ENCODE measurements at regions of chr14 and their contacts with region 1.

Region 1: DNA sequence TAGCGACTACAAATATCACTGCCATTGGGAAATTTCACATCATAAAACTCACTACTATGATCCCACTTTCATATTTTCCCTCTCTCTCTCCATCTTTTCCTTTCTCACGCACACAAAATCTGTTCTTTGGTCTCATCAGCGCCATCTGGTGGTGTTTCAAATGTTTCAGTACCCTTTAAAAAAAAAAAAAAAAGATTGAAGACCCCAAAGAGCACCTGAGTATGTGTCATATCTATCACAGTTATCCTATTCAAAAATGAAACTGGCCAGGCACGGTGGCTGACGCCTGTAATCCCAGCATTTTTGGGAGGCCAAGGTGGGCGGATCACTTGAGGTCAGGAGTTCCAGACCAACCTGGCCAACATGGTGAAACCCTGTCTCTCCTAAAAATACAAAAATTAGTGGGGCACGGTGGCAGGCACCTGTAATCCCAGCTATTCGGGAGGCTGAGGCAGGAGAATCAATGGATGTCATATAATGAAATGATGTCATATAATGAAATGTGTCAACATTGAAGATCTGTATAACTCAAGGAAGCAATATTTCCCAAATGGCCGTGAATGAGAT is 72.4 kb downstream of the TTC9 start:
- H3K4me3 ChIP-seq: no peak overlapping the region
- H3K27ac ChIP-seq: no peak overlapping the region
- H3K4me1 ChIP-seq: 0 out of 2 replicates have a peak, but pooled peaks cover 2% of the 10 kb centered on the region
- CTCF ChIP-seq: no peak

Region 2: DNA sequence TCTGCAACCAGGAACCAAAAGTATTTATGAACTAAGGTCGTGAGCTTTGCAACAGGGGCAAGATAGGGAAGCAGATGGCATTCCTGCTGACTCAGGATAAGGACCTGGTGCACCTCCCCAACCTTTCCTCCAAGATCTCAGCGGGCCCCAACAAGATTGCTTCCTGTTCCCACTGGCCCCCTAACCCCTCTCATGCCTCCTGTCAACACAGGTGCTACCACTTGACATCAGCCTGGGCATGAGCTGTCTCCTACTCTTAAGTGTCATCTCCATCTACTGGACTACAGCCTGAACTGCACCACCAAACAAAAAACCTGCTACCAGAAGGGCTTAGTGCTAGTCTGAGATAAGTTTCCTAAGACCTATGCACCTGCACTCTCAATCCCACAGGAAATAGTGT is 146.3 kb before region 1 on chr14:
- CTCF ChIA-PET with region 1: interaction called, 10 read pairs
- POLR2A ChIA-PET with region 1: no interaction called
- H3K4me3 ChIP-seq: no peak overlapping the region
- H3K27ac ChIP-seq: no peak overlapping the region
- H3K4me1 ChIP-seq: no peaks in the 10 kb centered on the region
- CTCF ChIP-seq: no peak

Region 3: GRCh38 chr14:70622111-70622712 is 91.9 kb before region 1 on chr14:
- CTCF ChIA-PET with region 1: interaction called, 29 read pairs
- POLR2A ChIA-PET with region 1: no interaction called
- H3K4me3 ChIP-seq: no peak overlapping the region
- H3K27ac ChIP-seq: no peak overlapping the region
- H3K4me1 ChIP-seq: no peaks in the 10 kb centered on the region
- CTCF ChIP-seq: no peak

Region 4: DNA sequence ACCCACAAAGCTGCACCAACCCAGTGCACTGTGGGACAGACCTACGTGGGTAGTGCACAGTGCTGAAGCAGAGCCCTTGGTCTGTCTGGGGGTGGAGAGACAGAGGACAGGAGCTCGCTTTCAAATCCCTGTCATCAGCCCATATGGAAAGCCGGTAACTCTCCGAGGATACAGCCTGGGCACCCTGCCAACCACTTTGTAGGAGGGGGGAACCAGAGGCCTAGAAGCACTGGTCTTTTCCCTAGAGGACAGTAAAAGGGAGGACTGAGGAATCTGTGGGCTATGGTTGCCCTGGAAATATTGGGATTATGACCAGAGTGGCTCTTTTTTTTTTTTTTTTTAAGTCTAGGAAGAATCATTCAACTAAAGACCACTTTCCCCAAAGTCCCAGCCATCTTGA is 20.9 kb after region 1 on chr14:
- CTCF ChIA-PET with region 1: no interaction called
- POLR2A ChIA-PET with region 1: no interaction called
- H3K4me3 ChIP-seq: no peak overlapping the region
- H3K27ac ChIP-seq: peak overlapping the region; percentile 43; the same call in 1 of the 2 replicates
- H3K4me1 ChIP-seq: peaks cover 16% of the 10 kb centered on the region
- CTCF ChIP-seq: no peak

Region 5: GRCh38 chr14:70816525-70816924 is 102.4 kb after region 1 on chr14:
- CTCF ChIA-PET with region 1: interaction called, 15 read pairs
- POLR2A ChIA-PET with region 1: no interaction called
- H3K4me3 ChIP-seq: no peak overlapping the region
- H3K27ac ChIP-seq: no peak overlapping the region
- H3K4me1 ChIP-seq: 0 out of 2 replicates have a peak, but pooled peaks cover 4% of the 10 kb centered on the region
- CTCF ChIP-seq: no peak

Measured in HEK293 (cell line).